HepG2 (cell line): ENCODE measurements at regions of chr10 and their contacts with region 1.

Region 1: DNA sequence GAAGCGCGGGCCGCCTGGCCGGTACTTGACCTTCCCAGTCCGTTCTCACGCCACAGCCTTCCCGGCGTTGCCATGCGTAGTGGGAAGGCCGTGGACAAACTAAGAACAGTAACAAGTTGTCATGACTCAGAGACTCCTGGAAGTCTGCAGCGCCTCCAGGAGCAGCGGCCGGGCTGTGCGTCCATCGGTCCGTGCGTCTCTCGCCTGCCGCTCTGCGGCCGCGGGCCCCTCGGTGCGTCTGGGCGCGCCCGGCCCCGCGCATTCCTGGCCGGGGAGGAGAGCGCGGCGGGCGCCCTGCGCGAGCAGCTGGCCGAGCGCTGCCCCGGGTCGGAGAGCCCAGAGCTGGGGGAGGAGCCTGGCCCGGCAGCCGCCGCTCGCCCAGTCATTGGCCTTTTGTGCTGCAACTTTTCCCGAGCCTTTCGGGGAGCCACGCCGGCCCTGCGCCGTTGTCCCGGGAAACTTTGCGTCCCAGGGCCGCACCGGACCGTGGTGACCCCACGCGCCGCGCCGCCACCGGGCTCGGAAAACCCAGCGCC is 123.7 kb downstream of the TACC2 start:
- DNase-seq: peak; percentile 77
- ATAC-seq: peak; percentile 94
- H3K4me3 ChIP-seq: peak overlapping the region; percentile 70 to 88 (median 87)
- H3K27ac ChIP-seq: peak overlapping the region; percentile 95
- H3K4me1 ChIP-seq: peaks cover 42% of the 10 kb centered on the region
- H3K27me3 ChIP-seq: no peaks in the 10 kb centered on the region
- CTCF ChIP-seq: peak; percentile 77
- EP300 ChIP-seq: 0 out of 4 replicates have a peak, but pooled peaks of 1 of the 2 experiments have one; percentile 26
- POLR2A ChIP-seq: peak; percentile 48 to 58; a peak in 3 of 4 replicates
- RAD21 ChIP-seq: peak; percentile 90

Region 2: DNA sequence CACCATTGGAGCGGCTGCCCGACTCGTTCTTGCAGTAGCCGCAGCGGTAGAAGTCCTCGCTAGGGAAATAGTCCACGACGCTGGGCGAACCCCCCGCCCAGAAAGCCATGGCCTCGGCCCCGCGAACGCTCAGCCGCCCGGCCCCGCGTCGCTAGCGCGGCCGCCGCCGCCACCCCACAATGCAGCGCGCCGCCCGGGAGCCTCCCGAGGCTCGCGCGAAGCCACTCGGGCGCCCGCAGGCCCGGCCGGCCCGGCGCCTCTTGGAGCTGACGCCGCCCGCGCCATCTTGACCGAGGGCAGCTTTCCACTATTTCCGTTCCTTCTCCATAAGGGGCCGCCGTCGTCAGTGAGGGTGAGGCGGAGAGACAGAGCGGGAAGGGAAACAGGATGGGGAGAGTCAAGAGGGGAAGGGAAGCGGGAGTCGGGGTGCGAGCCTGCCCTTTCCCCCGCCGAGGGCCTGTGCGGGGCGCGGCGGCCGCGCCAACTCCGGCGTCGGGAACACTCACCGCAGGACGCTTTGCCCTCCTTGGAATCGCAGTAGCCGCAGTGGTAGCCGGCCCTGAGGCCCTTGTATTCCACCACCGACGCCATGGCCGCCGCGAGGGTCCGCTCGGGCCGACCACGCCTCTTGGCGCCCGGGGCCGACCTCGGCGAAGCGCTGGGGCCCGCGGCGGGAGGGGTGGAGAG is 184.7 kb before region 1 on chr10 and contains the start of gene ATE1:
- CTCF ChIA-PET with region 1: no interaction called
- POLR2A ChIA-PET with region 1: interaction called, 4 read pairs
- in situ Hi-C with region 1: no loop called
- intact Hi-C with region 1: loop called (anchors 5 kb)
- DNase-seq: peak; percentile 88
- ATAC-seq: peak; percentile 91
- H3K4me3 ChIP-seq: peak within 1 kb of the TSS; percentile 91 to 98 (median 98)
- H3K27ac ChIP-seq: peak within 1 kb of the TSS; percentile 95
- H3K4me1 ChIP-seq: peaks cover 53% of the 10 kb centered on the region
- H3K27me3 ChIP-seq: no peaks in the 10 kb centered on the region; a peak in 1 of 5 replicates
- CTCF ChIP-seq: peak; percentile 51
- EP300 ChIP-seq: peak in 1 of 2 experiments; percentile 37; a peak in 2 of 4 replicates
- POLR2A ChIP-seq: peak; percentile 81 to 91
- RAD21 ChIP-seq: peak; percentile 39; the same call in 1 of the 2 replicates
- total RNA-seq, gene ATE1: 42.2 and 68.9 TPM in 2 replicates

Region 3: GRCh38 chr10:121974535-121975294 is 138.0 kb before region 1 on chr10 and contains the start of gene NSMCE4A:
- CTCF ChIA-PET with region 1: no interaction called
- POLR2A ChIA-PET with region 1: interaction called, 3 read pairs
- in situ Hi-C with region 1: no loop called
- intact Hi-C with region 1: loop called (anchors 2 kb)
- DNase-seq: peak; percentile 60
- ATAC-seq: peak; percentile 91
- H3K4me3 ChIP-seq: peak within 1 kb of the TSS; percentile 69 to 89 (median 83)
- H3K27ac ChIP-seq: peak within 1 kb of the TSS; percentile 97
- H3K4me1 ChIP-seq: peaks cover 27% of the 10 kb centered on the region
- H3K27me3 ChIP-seq: no peaks in the 10 kb centered on the region
- CTCF ChIP-seq: peak; percentile 78
- EP300 ChIP-seq: no peak; a peak in 1 of 4 replicates
- POLR2A ChIP-seq: peak; percentile 67 to 70; a peak in 3 of 4 replicates
- RAD21 ChIP-seq: peak; percentile 75
- total RNA-seq, gene NSMCE4A: 91.6 and 108 TPM in 2 replicates

Region 4: DNA sequence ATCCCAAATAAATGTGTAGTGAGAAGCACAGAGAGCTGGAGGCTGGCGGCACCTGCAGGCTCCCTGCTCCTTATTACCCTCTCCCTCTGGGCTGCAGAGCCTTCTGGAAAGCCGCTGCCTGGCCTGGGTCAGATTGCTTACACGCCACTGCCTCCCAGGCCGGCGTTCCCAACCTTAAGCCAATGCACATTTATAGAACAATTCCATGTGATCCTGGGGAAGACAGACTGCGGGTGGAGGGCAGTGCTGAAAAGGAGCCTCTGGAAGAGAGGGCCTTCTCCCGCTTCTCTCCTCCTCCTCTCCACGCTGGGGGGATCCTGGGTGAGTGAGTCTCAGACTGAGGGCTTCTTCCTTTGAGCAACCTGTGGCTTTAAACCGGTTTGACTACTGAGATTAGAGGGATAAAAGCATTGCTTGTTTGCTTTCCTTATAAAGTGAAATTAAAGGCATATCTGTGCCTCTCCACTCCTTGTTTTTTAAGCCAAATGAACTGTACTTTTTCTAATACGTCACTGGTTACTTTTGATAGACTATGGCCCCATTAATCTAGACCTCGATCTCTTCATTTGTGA is 118.2 kb before region 1 on chr10:
- CTCF ChIA-PET with region 1: no interaction called
- POLR2A ChIA-PET with region 1: no interaction called
- in situ Hi-C with region 1: no loop called
- intact Hi-C with region 1: loop called (anchors 5 kb)
- DNase-seq: no peak
- ATAC-seq: peak; percentile 72
- H3K4me3 ChIP-seq: peak overlapping the region in 1 of 3 experiments; percentile 33; a peak in 1 of 6 replicates
- H3K27ac ChIP-seq: no peak overlapping the region
- H3K4me1 ChIP-seq: peaks cover 35% of the 10 kb centered on the region
- H3K27me3 ChIP-seq: peaks cover 0 to 1% of the 10 kb centered on the region in 2 experiments; a peak in 2 of 5 replicates
- CTCF ChIP-seq: peak; percentile 25
- EP300 ChIP-seq: no peak
- POLR2A ChIP-seq: no peak
- RAD21 ChIP-seq: no peak

Region 5: DNA sequence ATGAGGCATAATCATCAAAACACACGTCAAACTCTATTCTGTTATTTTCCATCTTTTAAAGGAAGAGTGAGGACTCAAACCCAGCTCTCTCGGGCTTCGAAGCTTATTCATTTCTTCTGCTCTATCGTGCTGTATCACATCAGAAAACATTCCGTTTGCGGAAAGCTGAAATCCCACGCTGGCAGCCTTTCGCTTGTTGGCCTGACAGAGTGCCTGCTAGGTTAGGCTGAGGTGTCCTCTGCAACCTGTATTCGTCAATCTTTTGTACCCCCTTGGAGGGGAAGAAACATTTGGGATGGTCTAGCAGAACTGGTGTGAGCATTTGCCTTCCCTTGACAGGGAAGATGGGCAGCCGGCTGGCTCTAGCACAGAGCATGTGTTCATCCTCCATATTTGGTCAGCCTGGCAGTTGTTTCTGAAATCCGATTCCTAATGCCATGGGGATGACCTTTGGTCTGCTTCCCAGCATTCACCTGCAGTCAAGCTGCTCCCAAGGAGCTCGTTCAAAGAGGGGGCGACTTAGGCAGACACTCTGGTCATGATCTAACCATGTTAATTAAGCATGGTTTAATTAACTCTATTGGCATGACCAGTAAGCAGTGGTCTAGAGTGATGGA is 68.5 kb before region 1 on chr10:
- CTCF ChIA-PET with region 1: no interaction called
- POLR2A ChIA-PET with region 1: interaction called, 11 read pairs
- in situ Hi-C with region 1: no loop called
- intact Hi-C with region 1: no loop called
- DNase-seq: peak; percentile 76
- ATAC-seq: peak; percentile 75
- H3K4me3 ChIP-seq: peak overlapping the region in 2 of 3 experiments; percentile 13; a peak in 2 of 6 replicates
- H3K27ac ChIP-seq: peak overlapping the region; percentile 62
- H3K4me1 ChIP-seq: peaks cover 85% of the 10 kb centered on the region
- H3K27me3 ChIP-seq: no peaks in the 10 kb centered on the region
- CTCF ChIP-seq: no peak
- EP300 ChIP-seq: no peak
- POLR2A ChIP-seq: no peak
- RAD21 ChIP-seq: no peak

Region 6: DNA sequence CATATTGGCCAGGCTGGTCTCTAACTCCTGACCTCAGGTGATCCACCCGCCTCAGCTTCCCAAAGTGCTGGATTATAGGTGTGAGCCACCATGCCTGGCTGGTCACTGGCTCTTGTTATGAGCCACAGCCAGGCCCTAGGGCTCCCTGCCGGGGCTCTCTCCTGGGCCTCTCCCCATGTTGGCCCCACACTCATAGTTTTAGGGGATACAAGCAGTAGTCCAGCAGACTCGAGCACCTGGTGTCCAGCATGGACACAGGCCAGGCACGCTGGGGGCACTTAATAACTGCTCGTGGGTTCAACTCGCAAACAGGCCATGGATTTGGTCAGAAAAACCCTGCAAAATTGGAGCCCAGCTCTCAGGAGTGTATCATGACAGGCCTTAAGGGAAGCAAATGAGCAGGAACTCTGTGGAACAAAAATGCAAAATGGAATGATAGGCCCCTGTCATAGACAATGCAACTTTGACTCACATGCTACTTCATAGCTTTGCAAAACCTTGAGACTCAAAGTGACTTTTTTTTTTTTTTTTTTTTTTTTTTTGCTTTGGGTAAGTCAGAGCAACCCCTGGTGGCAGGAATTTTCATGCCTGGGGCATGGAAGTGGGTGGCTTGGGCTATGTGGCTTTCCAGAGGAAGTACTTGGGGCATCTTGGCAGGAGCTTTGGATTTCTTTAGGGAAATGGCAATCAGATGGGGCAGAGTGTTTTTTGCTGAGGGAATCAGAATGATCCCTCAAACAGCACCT is 61.3 kb before region 1 on chr10:
- CTCF ChIA-PET with region 1: interaction called, 17 read pairs
- POLR2A ChIA-PET with region 1: interaction called, 38 read pairs
- in situ Hi-C with region 1: loop called (anchors 5 kb)
- intact Hi-C with region 1: loop called (anchors 1 kb)
- DNase-seq: peak; percentile 70
- ATAC-seq: peak; percentile 34
- H3K4me3 ChIP-seq: no peak overlapping the region
- H3K27ac ChIP-seq: no peak overlapping the region
- H3K4me1 ChIP-seq: peaks cover 69% of the 10 kb centered on the region
- H3K27me3 ChIP-seq: no peaks in the 10 kb centered on the region
- CTCF ChIP-seq: peak; percentile 53
- EP300 ChIP-seq: no peak
- POLR2A ChIP-seq: no peak
- RAD21 ChIP-seq: no peak

Region 7: DNA sequence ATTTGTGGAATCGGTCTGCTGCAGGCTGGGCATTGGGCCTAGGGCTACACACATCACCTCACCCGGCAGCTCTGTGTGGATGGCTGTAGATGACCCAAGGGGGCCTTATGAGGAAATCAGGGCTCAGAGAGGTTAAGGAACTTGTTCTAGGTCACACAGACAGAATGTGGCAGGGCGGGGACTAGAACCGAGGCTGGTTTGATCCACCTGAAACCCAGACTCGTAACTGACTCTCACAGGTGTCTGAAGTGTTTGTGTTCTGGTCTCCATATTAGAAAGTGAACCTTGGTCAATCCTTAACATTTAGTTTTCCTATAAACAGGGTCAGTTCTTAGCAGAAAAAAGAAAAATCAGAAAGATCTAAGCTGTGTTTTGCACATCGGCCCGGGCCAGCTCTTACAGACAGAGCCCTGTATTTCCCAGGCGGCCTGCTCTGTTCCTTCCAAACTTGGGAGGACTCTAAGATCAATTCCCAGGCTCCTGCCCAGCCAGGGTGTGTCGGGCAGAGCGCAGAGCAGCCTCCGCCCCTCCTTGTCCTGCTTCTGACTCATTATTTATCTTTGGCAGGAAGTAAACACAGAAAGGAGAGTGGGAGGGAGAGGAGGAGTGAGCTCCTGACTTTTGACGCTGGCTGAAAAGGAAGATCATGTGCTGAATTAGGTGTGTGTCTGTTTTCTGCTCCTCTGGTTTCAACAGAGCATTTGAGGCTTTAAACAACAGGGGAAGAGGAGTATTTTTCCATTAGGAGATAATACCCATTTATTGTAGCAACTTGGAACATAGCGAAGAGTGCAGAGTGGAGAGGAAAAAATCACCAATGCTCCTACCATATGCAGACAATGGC is 49.6 kb before region 1 on chr10:
- CTCF ChIA-PET with region 1: no interaction called
- POLR2A ChIA-PET with region 1: interaction called, 19 read pairs
- in situ Hi-C with region 1: no loop called
- intact Hi-C with region 1: no loop called
- DNase-seq: peak; percentile 97
- ATAC-seq: peak; percentile 100
- H3K4me3 ChIP-seq: peak overlapping the region in 2 of 3 experiments; percentile 7 to 32; a peak in 3 of 6 replicates
- H3K27ac ChIP-seq: peak overlapping the region; percentile 75
- H3K4me1 ChIP-seq: peaks cover 52% of the 10 kb centered on the region
- H3K27me3 ChIP-seq: no peaks in the 10 kb centered on the region
- CTCF ChIP-seq: 0 out of 2 replicates have a peak, but pooled peaks have one; percentile 9
- EP300 ChIP-seq: peak; percentile 59 to 93; a peak in 3 of 4 replicates
- POLR2A ChIP-seq: peak in 1 of 2 experiments; percentile 26; a peak in 1 of 4 replicates
- RAD21 ChIP-seq: 0 out of 2 replicates have a peak, but pooled peaks have one; percentile 9